PC-9 (cell line): ENCODE measurements at regions of chr2 and their contacts with region 1.

Region 1: DNA sequence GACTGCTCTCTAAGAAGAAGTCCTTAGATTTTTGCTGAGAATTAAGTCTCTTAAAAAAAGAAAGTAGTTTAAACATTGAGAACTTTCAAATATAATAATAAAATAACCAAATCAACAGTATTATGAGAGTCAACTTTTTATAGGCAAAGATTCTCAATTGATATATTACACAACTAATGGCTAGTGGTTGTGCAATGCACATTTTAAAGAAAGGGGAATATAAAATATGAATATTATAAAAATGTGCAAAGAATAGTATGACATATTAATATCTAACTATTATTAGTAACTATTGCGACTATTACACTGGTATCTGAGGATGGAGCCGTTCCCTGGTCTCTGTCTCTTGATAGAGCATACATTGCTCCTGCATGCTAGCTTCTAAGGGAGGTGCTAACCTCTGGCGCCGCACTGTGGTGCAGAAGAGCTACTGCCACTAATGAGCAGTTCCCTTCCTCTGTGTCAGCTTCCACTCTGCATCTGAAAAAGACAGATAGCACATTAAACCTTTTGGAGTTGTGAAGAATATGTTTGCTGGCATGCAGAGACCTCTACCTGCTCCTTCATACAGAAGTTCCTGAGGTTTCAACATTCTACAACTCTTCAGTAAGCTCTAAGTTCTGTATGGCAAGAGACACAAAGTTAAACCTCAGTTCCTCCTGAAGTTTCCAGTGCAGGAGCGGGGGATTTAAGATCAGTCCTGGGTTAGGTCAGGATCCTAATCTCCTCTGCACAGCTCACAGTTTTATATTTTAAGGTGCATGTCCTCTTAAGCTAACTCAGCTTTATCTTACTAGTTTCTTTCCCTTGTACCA is 3.5 kb upstream of the SLC9A2 start:
- DNase-seq: peak; percentile 48 to 51
- H3K4me3 ChIP-seq: no peak overlapping the region
- H3K27ac ChIP-seq: no peak overlapping the region
- H3K4me1 ChIP-seq: peaks cover 19% of the 10 kb centered on the region
- H3K27me3 ChIP-seq: no peaks in the 10 kb centered on the region
- CTCF ChIP-seq: peak; percentile 94

Region 2: DNA sequence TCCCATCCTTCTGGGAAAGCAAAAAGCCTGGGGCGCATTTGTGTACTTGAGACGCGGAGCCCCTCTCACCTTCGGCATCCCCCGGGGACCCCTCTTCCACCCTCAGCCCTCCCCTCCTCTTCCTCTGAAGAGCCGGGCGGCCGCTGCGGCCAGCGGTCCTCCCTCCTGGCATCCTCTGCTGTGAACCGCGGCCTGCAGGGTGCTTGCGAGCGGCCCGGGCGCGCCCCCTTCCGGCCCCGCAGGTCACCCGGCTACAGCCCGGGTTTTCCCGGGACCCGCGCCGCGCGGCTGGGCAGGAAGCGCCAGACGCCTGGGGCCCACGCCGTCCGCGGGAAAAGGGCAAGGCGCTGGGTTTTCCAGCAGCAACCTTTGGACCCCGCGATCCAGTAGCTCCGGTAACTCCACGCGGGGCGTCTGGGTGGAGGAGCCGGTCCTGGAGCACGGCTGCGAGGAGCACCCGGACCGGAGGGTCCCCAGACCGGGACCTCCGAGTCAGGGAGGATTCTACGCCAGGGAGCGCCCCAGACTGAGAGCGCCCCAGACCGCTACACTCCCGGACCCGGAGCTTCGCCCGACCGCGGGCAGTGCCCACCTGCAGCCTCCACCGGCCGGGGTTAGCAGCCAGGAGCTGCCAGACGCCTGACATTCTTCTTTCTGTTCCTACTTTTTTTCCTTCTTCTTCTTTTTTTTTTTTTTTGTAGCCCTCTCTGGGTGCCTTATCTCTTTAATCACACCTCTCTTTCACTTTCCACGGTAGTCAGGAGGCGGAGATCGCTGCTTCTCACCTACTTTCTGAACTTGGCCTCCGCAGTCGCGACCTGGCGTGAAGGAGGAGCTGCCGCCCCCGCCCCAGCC is 260.1 kb before region 1 on chr2 and contains the start of gene IL18R1:
- CTCF ChIA-PET with region 1: no interaction called
- POLR2A ChIA-PET with region 1: no interaction called
- intact Hi-C with region 1: loop called (anchors 5 kb)
- DNase-seq: peak; percentile 58 to 80
- H3K4me3 ChIP-seq: peak within 1 kb of the TSS; percentile 89
- H3K27ac ChIP-seq: peak within 1 kb of the TSS; percentile 53
- H3K4me1 ChIP-seq: peaks cover 38% of the 10 kb centered on the region
- H3K27me3 ChIP-seq: no peaks in the 10 kb centered on the region
- CTCF ChIP-seq: peak; percentile 82
- total RNA-seq, gene IL18R1: 1.9 and 3.4 TPM in 2 replicates

Region 3: GRCh38 chr2:102473020-102473419 is 142.8 kb before region 1 on chr2 and contains the start of gene SLC9A4:
- CTCF ChIA-PET with region 1: interaction called, 28 read pairs
- POLR2A ChIA-PET with region 1: no interaction called
- intact Hi-C with region 1: loop called (anchors 1 kb)
- DNase-seq: peak; percentile 61 to 69
- H3K4me3 ChIP-seq: no peak within 1 kb of the TSS
- H3K27ac ChIP-seq: no peak within 1 kb of the TSS
- H3K4me1 ChIP-seq: peaks cover 9% of the 10 kb centered on the region; the same call in 1 of the 2 replicates
- H3K27me3 ChIP-seq: no peaks in the 10 kb centered on the region
- CTCF ChIP-seq: peak; percentile 97
- total RNA-seq, gene SLC9A4: 0.85 and 1.1 TPM in 2 replicates

Region 4: GRCh38 chr2:102514061-102514785 is 101.6 kb before region 1 on chr2:
- CTCF ChIA-PET with region 1: interaction called, 3 read pairs
- POLR2A ChIA-PET with region 1: no interaction called
- intact Hi-C with region 1: loop called (anchors 2 kb)
- DNase-seq: peak; percentile 63 to 93
- H3K4me3 ChIP-seq: 0 out of 2 replicates have a peak overlapping the region, but pooled peaks have one; percentile 30
- H3K27ac ChIP-seq: peak overlapping the region; percentile 76
- H3K4me1 ChIP-seq: peaks cover 33% of the 10 kb centered on the region
- H3K27me3 ChIP-seq: no peaks in the 10 kb centered on the region
- CTCF ChIP-seq: no peak

Region 5: GRCh38 chr2:102660070-102660469 is 44.2 kb after region 1 on chr2:
- CTCF ChIA-PET with region 1: no interaction called
- POLR2A ChIA-PET with region 1: interaction called, 10 read pairs
- intact Hi-C with region 1: loop called (anchors 1 kb)
- DNase-seq: peak in 1 of 2 experiments; percentile 37
- H3K4me3 ChIP-seq: no peak overlapping the region
- H3K27ac ChIP-seq: no peak overlapping the region
- H3K4me1 ChIP-seq: peaks cover 13% of the 10 kb centered on the region
- H3K27me3 ChIP-seq: no peaks in the 10 kb centered on the region
- CTCF ChIP-seq: no peak

Region 6: GRCh38 chr2:102806250-102806837 is 190.5 kb after region 1 on chr2:
- CTCF ChIA-PET with region 1: no interaction called
- POLR2A ChIA-PET with region 1: no interaction called
- intact Hi-C with region 1: loop called (anchors 1 kb)
- DNase-seq: peak in 1 of 2 experiments; percentile 67
- H3K4me3 ChIP-seq: no peak overlapping the region
- H3K27ac ChIP-seq: no peak overlapping the region
- H3K4me1 ChIP-seq: no peaks in the 10 kb centered on the region
- H3K27me3 ChIP-seq: no peaks in the 10 kb centered on the region
- CTCF ChIP-seq: peak; percentile 77

Region 7: GRCh38 chr2:102932471-102932870 is 316.6 kb after region 1 on chr2:
- CTCF ChIA-PET with region 1: no interaction called
- POLR2A ChIA-PET with region 1: no interaction called
- intact Hi-C with region 1: no loop called
- DNase-seq: peak; percentile 45 to 91
- H3K4me3 ChIP-seq: no peak overlapping the region
- H3K27ac ChIP-seq: 0 out of 2 replicates have a peak overlapping the region, but pooled peaks have one; percentile 3
- H3K4me1 ChIP-seq: peaks cover 12% of the 10 kb centered on the region
- H3K27me3 ChIP-seq: no peaks in the 10 kb centered on the region
- CTCF ChIP-seq: no peak